Gastrocnemius medialis (tissue), 4 donors: ENCODE measurements at regions of chr11 and their contacts with region 1.

Region 1: GRCh38 chr11:110092515-110093404 is at the start of gene ZC3H12C:
- DNase-seq: peak; percentile 84 to 90
- ATAC-seq: peak; percentile 85 to 88
- H3K4me3 ChIP-seq: peak within 1 kb of the TSS; percentile 72 to 95 (median 80)
- H3K27ac ChIP-seq: peak within 1 kb of the TSS; percentile 86 to 99 (median 96)
- H3K4me1 ChIP-seq: peaks cover 19 to 28% of the 10 kb centered on the region in 2 donors
- H3K27me3 ChIP-seq: no peaks in the 10 kb centered on the region
- CTCF ChIP-seq: peak in 4 of 5 experiments; percentile 64 to 93 (median 74)
- POLR2A ChIP-seq: peak; percentile 63 to 78
- total RNA-seq, gene ZC3H12C: 20.9 to 41.1 (median 30.9) TPM

Region 2: DNA sequence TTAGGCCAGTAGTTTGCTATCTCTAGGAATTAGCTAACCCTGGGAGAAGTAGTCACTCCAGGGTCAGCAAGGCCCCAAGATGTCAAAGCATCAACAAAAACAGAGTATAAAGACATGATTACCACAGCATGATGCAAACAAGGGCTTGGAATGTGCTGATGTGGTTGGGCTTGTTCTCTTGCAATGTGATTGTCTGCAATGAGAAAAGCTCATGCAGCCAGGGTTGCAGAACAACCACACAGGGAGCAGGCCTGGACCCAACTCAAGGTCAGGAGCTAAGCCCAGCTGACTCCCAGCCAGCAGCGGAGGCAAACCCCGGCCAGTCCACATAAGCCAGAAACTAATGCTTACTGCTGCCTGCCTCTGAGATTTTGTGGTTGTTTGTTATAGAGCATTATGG is 131.9 kb before region 1 on chr11:
- in situ Hi-C with region 1: no loop called
- intact Hi-C with region 1: loop called (anchors 5 kb)
- DNase-seq: peak; percentile 37 to 67
- ATAC-seq: peak; percentile 82 to 91
- H3K4me3 ChIP-seq: no peak overlapping the region
- H3K27ac ChIP-seq: peak overlapping the region in 1 of 4 donors; percentile 40
- H3K4me1 ChIP-seq: peaks cover 12 to 16% of the 10 kb centered on the region in 2 donors
- H3K27me3 ChIP-seq: no peaks in the 10 kb centered on the region
- CTCF ChIP-seq: no peak
- POLR2A ChIP-seq: no peak

Region 3: GRCh38 chr11:110000031-110000502 is 92.7 kb before region 1 on chr11:
- in situ Hi-C with region 1: no loop called
- intact Hi-C with region 1: loop called (anchors 1 kb)
- DNase-seq: peak in 1 of 2 donors; percentile 20
- ATAC-seq: peak; percentile 100
- H3K4me3 ChIP-seq: no peak overlapping the region
- H3K27ac ChIP-seq: peak overlapping the region; percentile 60 to 80 (median 75)
- H3K4me1 ChIP-seq: peaks cover 0 to 19% of the 10 kb centered on the region in 2 donors
- H3K27me3 ChIP-seq: no peaks in the 10 kb centered on the region
- CTCF ChIP-seq: no peak
- POLR2A ChIP-seq: no peak

Region 4: GRCh38 chr11:110053848-110054414 is 38.8 kb before region 1 on chr11:
- in situ Hi-C with region 1: no loop called
- intact Hi-C with region 1: no loop called
- DNase-seq: no peak
- ATAC-seq: no peak
- H3K4me3 ChIP-seq: no peak overlapping the region
- H3K27ac ChIP-seq: no peak overlapping the region
- H3K4me1 ChIP-seq: no peaks in the 10 kb centered on the region
- H3K27me3 ChIP-seq: no peaks in the 10 kb centered on the region
- CTCF ChIP-seq: no peak
- POLR2A ChIP-seq: no peak

Region 5: GRCh38 chr11:110069158-110069737 is 23.5 kb before region 1 on chr11:
- in situ Hi-C with region 1: no loop called
- intact Hi-C with region 1: loop called (anchors 1 kb)
- DNase-seq: peak; percentile 70 to 91
- ATAC-seq: peak; percentile 94 to 97
- H3K4me3 ChIP-seq: peak overlapping the region in 2 of 4 donors; percentile 7 to 9
- H3K27ac ChIP-seq: peak overlapping the region; percentile 64 to 85 (median 78)
- H3K4me1 ChIP-seq: peaks cover 21% of the 10 kb centered on the region in 2 donors
- H3K27me3 ChIP-seq: no peaks in the 10 kb centered on the region
- CTCF ChIP-seq: no peak
- POLR2A ChIP-seq: peak in 1 of 2 donors; percentile 31

Region 6: GRCh38 chr11:110296226-110297075 is 203.7 kb after region 1 on chr11 and contains the start of gene RDX:
- in situ Hi-C with region 1: no loop called
- intact Hi-C with region 1: loop called (anchors 1 kb)
- DNase-seq: peak; percentile 47 to 78
- ATAC-seq: peak; percentile 91 to 96
- H3K4me3 ChIP-seq: peak within 1 kb of the TSS; percentile 77 to 96 (median 88)
- H3K27ac ChIP-seq: peak within 1 kb of the TSS; percentile 93 to 99 (median 96)
- H3K4me1 ChIP-seq: peaks cover 31 to 33% of the 10 kb centered on the region in 2 donors
- H3K27me3 ChIP-seq: no peaks in the 10 kb centered on the region
- CTCF ChIP-seq: peak in 2 of 5 experiments; percentile 34 to 35
- POLR2A ChIP-seq: peak; percentile 81 to 84
- total RNA-seq, gene RDX: 95.7 to 140 (median 115) TPM

Region 7: DNA sequence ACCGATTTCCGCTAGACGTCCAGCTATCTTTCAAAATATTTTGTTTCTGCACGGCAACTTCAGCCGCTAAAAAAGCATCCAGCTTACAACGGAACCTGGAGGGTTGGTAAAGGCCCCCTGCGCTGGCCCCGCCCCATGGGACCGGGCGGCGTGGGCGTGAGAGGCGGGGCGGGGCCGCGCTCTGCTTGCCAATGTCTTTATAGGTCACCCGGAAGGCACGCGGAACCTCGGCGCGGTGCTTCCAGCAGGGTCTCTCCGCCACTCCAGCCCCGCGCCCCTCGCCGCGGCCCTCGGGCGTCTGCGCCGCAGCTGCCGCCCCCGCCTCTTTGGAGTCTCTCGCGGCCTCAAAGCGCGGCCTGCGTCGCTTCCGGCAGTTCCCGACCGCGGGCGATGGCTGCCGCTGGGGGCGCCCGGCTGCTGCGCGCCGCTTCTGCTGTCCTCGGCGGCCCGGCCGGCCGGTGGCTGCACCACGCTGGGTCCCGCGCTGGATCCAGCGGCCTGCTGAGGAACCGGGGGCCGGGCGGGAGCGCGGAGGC is 337.0 kb after region 1 on chr11 and contains the start of gene FDX1:
- in situ Hi-C with region 1: no loop called
- intact Hi-C with region 1: loop called (anchors 10 kb)
- DNase-seq: peak; percentile 53 to 73
- ATAC-seq: peak; percentile 91 to 92
- H3K4me3 ChIP-seq: peak within 1 kb of the TSS; percentile 62 to 88 (median 68)
- H3K27ac ChIP-seq: peak within 1 kb of the TSS; percentile 85 to 92 (median 90)
- H3K4me1 ChIP-seq: peaks cover 21 to 24% of the 10 kb centered on the region in 2 donors
- H3K27me3 ChIP-seq: no peaks in the 10 kb centered on the region
- CTCF ChIP-seq: peak in 4 of 5 experiments; percentile 75 to 90 (median 83)
- POLR2A ChIP-seq: peak; percentile 68 to 80
- total RNA-seq, gene FDX1: 13.3 to 25.0 (median 21.3) TPM